ENCODE measurements at regions of chr9 and their contacts with region 1.

Region 1: DNA sequence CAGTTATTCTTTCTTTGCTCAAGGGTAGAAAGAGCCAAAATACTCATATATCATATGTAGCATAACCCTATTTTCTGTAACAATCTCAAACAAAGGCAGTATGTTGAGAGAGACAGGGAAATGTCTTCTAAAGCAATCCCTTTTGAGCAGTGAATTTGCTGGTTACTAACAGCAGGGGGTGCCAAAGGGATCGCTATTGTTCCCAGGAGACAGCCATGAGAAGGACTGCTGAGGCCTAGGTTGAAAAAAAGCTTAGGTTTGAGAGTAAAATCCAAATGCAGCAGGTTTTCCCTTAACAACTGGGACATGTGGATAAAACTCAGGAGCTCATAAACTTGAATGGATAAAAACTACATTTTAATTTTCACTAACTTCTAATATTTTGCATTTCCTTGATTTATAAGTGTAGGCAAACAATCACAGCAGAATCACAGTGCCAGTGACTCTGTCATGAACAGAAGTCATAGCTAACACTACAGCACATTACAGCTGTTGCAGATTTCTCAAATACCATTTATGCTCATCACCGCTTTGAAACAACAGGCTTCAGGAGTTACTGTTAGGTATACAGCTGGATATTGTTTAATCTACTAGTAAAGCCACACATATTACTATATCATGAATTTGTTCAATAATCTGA is 148.4 kb downstream of the MAPKAP1 start:
- DNase-seq: peak; percentile 80
- ATAC-seq: peak; percentile 81
- H3K4me3 ChIP-seq: no peak overlapping the region
- H3K4me3 Mint-ChIP-seq: no peak overlapping the region
- H3K27ac ChIP-seq: no peak overlapping the region
- H3K27ac Mint-ChIP-seq: peak overlapping the region; percentile 32
- H3K4me1 ChIP-seq: peaks cover 18 to 30% of the 10 kb centered on the region in 2 donors
- H3K4me1 Mint-ChIP-seq: peaks cover 22% of the 10 kb centered on the region
- H3K27me3 ChIP-seq: no peaks in the 10 kb centered on the region
- H3K27me3 Mint-ChIP-seq: no peaks in the 10 kb centered on the region
- CTCF ChIP-seq: peak; percentile 90

Region 2: GRCh38 chr9:125407974-125408900 is 150.3 kb before region 1 on chr9:
- CTCF ChIA-PET with region 1: interaction called, 26 read pairs
- POLR2A ChIA-PET with region 1: no interaction called
- intact Hi-C with region 1: loop called (anchors 1 kb)
- DNase-seq: peak; percentile 87
- ATAC-seq: peak; percentile 81
- H3K4me3 ChIP-seq: peak overlapping the region; percentile 5 to 68 (median 51)
- H3K4me3 Mint-ChIP-seq: peak overlapping the region; percentile 80
- H3K27ac ChIP-seq: peak overlapping the region in 1 of 2 donors; percentile 15
- H3K27ac Mint-ChIP-seq: no peak overlapping the region
- H3K4me1 ChIP-seq: peaks cover 10 to 19% of the 10 kb centered on the region in 2 donors
- H3K4me1 Mint-ChIP-seq: peaks cover 16% of the 10 kb centered on the region
- H3K27me3 ChIP-seq: peaks cover 0 to 33% (median 9%) of the 10 kb centered on the region in 4 experiments
- H3K27me3 Mint-ChIP-seq: peaks cover 23% of the 10 kb centered on the region
- CTCF ChIP-seq: peak; percentile 93

Region 3: GRCh38 chr9:125529589-125530515 is 28.7 kb before region 1 on chr9:
- CTCF ChIA-PET with region 1: interaction called, 10 read pairs
- POLR2A ChIA-PET with region 1: no interaction called
- intact Hi-C with region 1: no loop called
- DNase-seq: peak; percentile 72
- ATAC-seq: peak; percentile 72
- H3K4me3 ChIP-seq: peak overlapping the region in 2 of 5 experiments; percentile 23 to 34
- H3K4me3 Mint-ChIP-seq: peak overlapping the region; percentile 78
- H3K27ac ChIP-seq: peak overlapping the region; percentile 77 to 91
- H3K27ac Mint-ChIP-seq: peak overlapping the region; percentile 81
- H3K4me1 ChIP-seq: peaks cover 59 to 70% of the 10 kb centered on the region in 2 donors
- H3K4me1 Mint-ChIP-seq: peaks cover 65% of the 10 kb centered on the region
- H3K27me3 ChIP-seq: no peaks in the 10 kb centered on the region
- H3K27me3 Mint-ChIP-seq: no peaks in the 10 kb centered on the region
- CTCF ChIP-seq: no peak

Region 4: DNA sequence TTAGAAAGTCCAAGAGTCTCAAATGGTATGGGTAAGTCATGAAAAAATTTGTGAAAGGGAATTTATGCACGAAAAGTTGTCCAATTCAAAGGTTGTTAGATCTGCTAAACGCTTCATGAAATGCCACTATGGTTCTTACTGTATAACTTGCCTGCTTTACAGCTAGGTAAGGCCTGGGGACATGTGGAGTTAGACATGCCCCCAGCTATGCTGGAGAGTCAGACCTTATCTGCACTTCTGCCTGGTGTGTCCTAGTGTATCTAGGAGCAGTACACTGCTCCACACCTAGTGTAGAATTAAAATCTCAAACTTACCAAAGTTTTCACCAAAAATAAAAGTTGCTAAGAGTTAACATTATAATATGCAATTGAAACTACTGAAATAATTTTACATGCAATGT is 11.7 kb after region 1 on chr9:
- CTCF ChIA-PET with region 1: interaction called, 15 read pairs
- POLR2A ChIA-PET with region 1: no interaction called
- intact Hi-C with region 1: no loop called
- DNase-seq: no peak
- ATAC-seq: no peak
- H3K4me3 ChIP-seq: no peak overlapping the region
- H3K4me3 Mint-ChIP-seq: no peak overlapping the region
- H3K27ac ChIP-seq: no peak overlapping the region
- H3K27ac Mint-ChIP-seq: no peak overlapping the region
- H3K4me1 ChIP-seq: no peaks in the 10 kb centered on the region
- H3K4me1 Mint-ChIP-seq: no peaks in the 10 kb centered on the region
- H3K27me3 ChIP-seq: no peaks in the 10 kb centered on the region
- H3K27me3 Mint-ChIP-seq: no peaks in the 10 kb centered on the region
- CTCF ChIP-seq: no peak

Region 5: GRCh38 chr9:125638239-125639045 is 79.9 kb after region 1 on chr9:
- CTCF ChIA-PET with region 1: no interaction called
- POLR2A ChIA-PET with region 1: no interaction called
- intact Hi-C with region 1: no loop called
- DNase-seq: no peak
- ATAC-seq: no peak
- H3K4me3 ChIP-seq: no peak overlapping the region
- H3K4me3 Mint-ChIP-seq: peak overlapping the region; percentile 31
- H3K27ac ChIP-seq: no peak overlapping the region
- H3K27ac Mint-ChIP-seq: peak overlapping the region; percentile 54
- H3K4me1 ChIP-seq: peaks cover 57 to 66% of the 10 kb centered on the region in 2 donors
- H3K4me1 Mint-ChIP-seq: peaks cover 71% of the 10 kb centered on the region
- H3K27me3 ChIP-seq: no peaks in the 10 kb centered on the region
- H3K27me3 Mint-ChIP-seq: no peaks in the 10 kb centered on the region
- CTCF ChIP-seq: no peak

Region 6: DNA sequence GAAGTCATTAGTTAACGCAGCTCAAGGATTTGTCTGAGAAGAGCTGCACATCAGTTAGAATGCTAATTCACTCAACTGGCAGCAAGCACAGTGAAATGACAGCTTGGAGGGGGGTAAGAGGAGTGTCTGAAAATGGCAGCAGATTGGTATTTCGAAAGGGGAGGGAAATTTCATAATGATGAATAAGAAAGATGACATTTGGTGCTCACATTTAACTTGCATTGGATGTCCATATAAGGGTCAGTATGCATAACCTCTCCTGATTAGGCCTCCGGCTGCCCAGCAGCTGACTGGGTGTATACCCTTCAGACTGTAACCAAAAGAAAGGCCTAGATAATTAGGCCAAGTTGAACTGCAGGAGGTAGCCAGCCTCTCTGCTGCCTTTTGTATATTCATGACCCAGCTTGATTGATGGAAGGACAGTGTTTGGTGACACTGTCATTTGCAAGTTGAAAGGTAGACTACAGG is 319.6 kb after region 1 on chr9:
- CTCF ChIA-PET with region 1: no interaction called
- POLR2A ChIA-PET with region 1: no interaction called
- intact Hi-C with region 1: no loop called
- DNase-seq: no peak
- ATAC-seq: no peak
- H3K4me3 ChIP-seq: no peak overlapping the region
- H3K4me3 Mint-ChIP-seq: no peak overlapping the region
- H3K27ac ChIP-seq: no peak overlapping the region
- H3K27ac Mint-ChIP-seq: no peak overlapping the region
- H3K4me1 ChIP-seq: no peaks in the 10 kb centered on the region
- H3K4me1 Mint-ChIP-seq: no peaks in the 10 kb centered on the region
- H3K27me3 ChIP-seq: no peaks in the 10 kb centered on the region
- H3K27me3 Mint-ChIP-seq: no peaks in the 10 kb centered on the region
- CTCF ChIP-seq: no peak

Region 7: GRCh38 chr9:125889476-125890419 is 331.2 kb after region 1 on chr9:
- CTCF ChIA-PET with region 1: no interaction called
- POLR2A ChIA-PET with region 1: no interaction called
- intact Hi-C with region 1: no loop called
- DNase-seq: peak; percentile 69
- ATAC-seq: peak; percentile 81
- H3K4me3 ChIP-seq: peak overlapping the region; percentile 40 to 73 (median 59)
- H3K4me3 Mint-ChIP-seq: peak overlapping the region; percentile 86
- H3K27ac ChIP-seq: no peak overlapping the region
- H3K27ac Mint-ChIP-seq: peak overlapping the region; percentile 4
- H3K4me1 ChIP-seq: peaks cover 10 to 11% of the 10 kb centered on the region in 2 donors
- H3K4me1 Mint-ChIP-seq: peaks cover 24% of the 10 kb centered on the region
- H3K27me3 ChIP-seq: peaks cover 0 to 13% (median 0%) of the 10 kb centered on the region in 4 experiments
- H3K27me3 Mint-ChIP-seq: no peaks in the 10 kb centered on the region
- CTCF ChIP-seq: no peak

Region 8: DNA sequence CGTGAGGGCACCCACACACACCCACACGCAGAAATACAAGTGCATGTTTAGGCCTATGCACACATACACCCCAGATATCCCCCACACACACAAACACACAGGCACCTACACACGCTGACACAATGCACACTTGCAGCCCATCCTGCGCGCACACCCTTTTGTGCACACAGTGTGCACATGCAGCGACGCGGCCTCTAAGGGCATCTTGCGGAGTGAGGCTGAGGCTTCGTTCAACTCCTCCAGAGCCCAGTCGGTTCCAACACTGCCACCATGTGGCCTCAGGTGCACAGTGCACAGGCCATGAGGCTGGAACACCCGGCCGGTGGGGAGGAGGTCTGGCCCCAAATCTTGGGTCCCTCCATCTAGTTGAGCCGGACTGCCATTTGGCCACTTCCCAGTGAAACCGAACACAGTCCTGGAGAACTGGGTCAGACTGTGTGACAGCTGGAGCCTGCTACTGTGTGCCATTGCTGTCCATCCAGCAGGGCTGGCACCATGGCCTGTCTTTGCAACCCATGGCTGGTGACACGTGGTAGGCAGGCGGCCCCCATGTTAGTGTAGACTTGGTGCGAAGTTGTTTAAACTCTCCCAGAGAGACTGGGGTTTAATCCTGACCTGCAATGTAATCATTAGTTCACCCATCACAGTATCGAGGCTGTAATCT is 670.3 kb after region 1 on chr9:
- CTCF ChIA-PET with region 1: interaction called, 5 read pairs
- POLR2A ChIA-PET with region 1: no interaction called
- intact Hi-C with region 1: loop called (anchors 1 kb)
- DNase-seq: peak; percentile 79
- ATAC-seq: peak; percentile 98
- H3K4me3 ChIP-seq: no peak overlapping the region
- H3K4me3 Mint-ChIP-seq: no peak overlapping the region
- H3K27ac ChIP-seq: no peak overlapping the region
- H3K27ac Mint-ChIP-seq: no peak overlapping the region
- H3K4me1 ChIP-seq: peaks cover 0 to 3% of the 10 kb centered on the region in 2 donors
- H3K4me1 Mint-ChIP-seq: peaks cover 6% of the 10 kb centered on the region
- H3K27me3 ChIP-seq: peaks cover 0 to 25% (median 0%) of the 10 kb centered on the region in 4 experiments
- H3K27me3 Mint-ChIP-seq: peaks cover 40% of the 10 kb centered on the region
- CTCF ChIP-seq: peak; percentile 89

Measured in B cell (primary cell).